Naive thymus-derived CD4-positive, alpha-beta T cell (primary cell): ENCODE measurements at regions of chrX and their contacts with region 1.

Region 1: DNA sequence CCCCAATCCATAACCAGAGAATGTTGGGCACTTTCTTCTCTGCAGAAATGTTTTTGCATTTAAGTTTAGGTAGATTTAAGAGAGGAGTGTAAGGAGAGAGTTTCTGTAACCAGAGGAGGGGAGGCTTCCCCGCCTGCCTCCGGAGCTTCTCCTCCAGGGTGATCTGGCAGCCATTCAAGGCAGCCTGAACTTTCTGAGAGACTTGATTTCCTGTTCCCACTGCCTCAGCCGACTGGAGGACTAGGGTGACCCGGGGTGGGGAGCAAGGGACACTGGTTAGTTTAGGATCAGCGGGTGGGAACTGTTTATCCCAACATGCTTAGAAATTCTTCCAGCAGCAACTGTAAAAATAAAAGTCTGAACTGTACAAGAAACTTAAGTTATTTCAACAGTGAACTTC is 15.1 kb downstream of the FAM9C start:
- DNase-seq: peak in 2 of 9 donors; percentile 13 to 23
- ATAC-seq: peak; percentile 44
- H3K4me3 ChIP-seq: no peak overlapping the region
- H3K4me3 Mint-ChIP-seq: peak overlapping the region; percentile 20 to 78 (median 62)
- H3K27ac ChIP-seq: peak overlapping the region; percentile 71
- H3K27ac Mint-ChIP-seq: peak overlapping the region; percentile 81 to 98 (median 93)
- H3K4me1 ChIP-seq: peaks cover 51 to 52% of the 10 kb centered on the region in 2 donors
- H3K4me1 Mint-ChIP-seq: peaks cover 33 to 88% (median 72%) of the 10 kb centered on the region in 7 donors
- H3K27me3 ChIP-seq: no peaks in the 10 kb centered on the region
- H3K27me3 Mint-ChIP-seq: no peaks in the 10 kb centered on the region

Region 2: GRCh38 chrX:13000301-13000811 is 29.0 kb before region 1 on chrX:
- CTCF ChIA-PET with region 1: interaction called, 5 read pairs
- POLR2A ChIA-PET with region 1: interaction called, 33 read pairs
- intact Hi-C with region 1: loop called in 1 of 2 experiments (anchors 1 kb)
- DNase-seq: peak in 7 of 9 donors; percentile 46 to 74 (median 68)
- ATAC-seq: peak; percentile 65
- H3K4me3 ChIP-seq: peak overlapping the region; percentile 42
- H3K4me3 Mint-ChIP-seq: peak overlapping the region; percentile 70 to 86 (median 84)
- H3K27ac ChIP-seq: peak overlapping the region; percentile 77
- H3K27ac Mint-ChIP-seq: peak overlapping the region; percentile 83 to 98 (median 95)
- H3K4me1 ChIP-seq: peaks cover 66 to 68% of the 10 kb centered on the region in 2 donors
- H3K4me1 Mint-ChIP-seq: peaks cover 27 to 88% (median 74%) of the 10 kb centered on the region in 7 donors
- H3K27me3 ChIP-seq: no peaks in the 10 kb centered on the region
- H3K27me3 Mint-ChIP-seq: no peaks in the 10 kb centered on the region

Region 3: DNA sequence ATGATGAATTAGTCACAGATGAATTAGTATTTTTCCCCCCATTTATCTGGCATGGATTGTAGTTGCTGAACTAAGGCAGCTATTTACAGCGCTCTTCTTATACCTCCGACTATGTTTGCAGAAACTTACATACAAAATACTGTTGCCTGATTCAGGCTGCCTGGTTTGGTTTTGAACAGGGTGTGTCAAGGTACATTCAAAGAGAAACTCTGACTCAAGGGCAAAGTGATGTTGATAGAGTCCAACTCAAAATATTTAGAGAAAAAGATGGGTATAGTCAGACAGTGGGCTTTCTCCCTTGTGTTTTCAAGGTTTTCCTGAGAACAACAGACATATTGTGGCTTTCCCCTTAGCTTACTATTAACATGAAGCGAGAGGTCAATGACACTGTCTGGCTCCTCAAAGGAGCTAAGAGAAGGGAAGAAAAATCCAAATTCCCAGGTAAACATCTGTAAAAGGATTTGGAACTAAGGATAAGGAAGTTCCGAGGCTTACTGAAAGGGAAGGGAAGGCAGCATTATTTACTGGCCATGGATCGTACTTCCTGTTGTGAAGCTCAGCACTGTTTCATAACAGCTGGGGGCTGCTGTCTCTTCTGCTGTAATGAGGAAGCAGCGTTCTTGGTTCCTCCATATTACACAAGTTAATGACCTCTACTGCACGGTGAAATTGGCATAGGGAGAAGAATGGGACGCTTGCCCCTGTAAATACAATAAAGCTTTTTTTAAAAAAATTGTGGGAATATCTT is 15.8 kb before region 1 on chrX:
- CTCF ChIA-PET with region 1: interaction called, 4 read pairs
- POLR2A ChIA-PET with region 1: interaction called, 26 read pairs
- intact Hi-C with region 1: loop called in 1 of 2 experiments (anchors 1 kb)
- DNase-seq: peak in 5 of 9 donors; percentile 16 to 45 (median 34)
- ATAC-seq: peak; percentile 85
- H3K4me3 ChIP-seq: peak overlapping the region; percentile 31
- H3K4me3 Mint-ChIP-seq: peak overlapping the region; percentile 20 to 75 (median 58)
- H3K27ac ChIP-seq: peak overlapping the region; percentile 65
- H3K27ac Mint-ChIP-seq: peak overlapping the region; percentile 80 to 92 (median 87)
- H3K4me1 ChIP-seq: peaks cover 6 to 44% of the 10 kb centered on the region in 2 donors
- H3K4me1 Mint-ChIP-seq: peaks cover 16 to 80% (median 68%) of the 10 kb centered on the region in 7 donors
- H3K27me3 ChIP-seq: no peaks in the 10 kb centered on the region
- H3K27me3 Mint-ChIP-seq: no peaks in the 10 kb centered on the region

Region 4: GRCh38 chrX:13051529-13052172 is 22.3 kb after region 1 on chrX:
- CTCF ChIA-PET with region 1: interaction called, 18 read pairs
- POLR2A ChIA-PET with region 1: interaction called, 215 read pairs
- intact Hi-C with region 1: loop called (anchors 1 to 2 kb)
- DNase-seq: peak in 7 of 9 donors; percentile 69 to 87 (median 79)
- ATAC-seq: peak; percentile 84
- H3K4me3 ChIP-seq: peak overlapping the region; percentile 25
- H3K4me3 Mint-ChIP-seq: peak overlapping the region; percentile 46 to 80 (median 58)
- H3K27ac ChIP-seq: peak overlapping the region; percentile 74
- H3K27ac Mint-ChIP-seq: peak overlapping the region; percentile 93 to 96 (median 95)
- H3K4me1 ChIP-seq: peaks cover 39 to 85% of the 10 kb centered on the region in 2 donors
- H3K4me1 Mint-ChIP-seq: peaks cover 14 to 93% (median 81%) of the 10 kb centered on the region in 7 donors
- H3K27me3 ChIP-seq: no peaks in the 10 kb centered on the region
- H3K27me3 Mint-ChIP-seq: no peaks in the 10 kb centered on the region